Activated CD4-positive, alpha-beta T cell treated with anti-CD3 and anti-CD28 coated beads for 36 hours (primary cell): ENCODE measurements at regions of chr21 and their contacts with region 1.

Region 1: GRCh38 chr21:32392880-32393676 is at the start of gene URB1:
- DNase-seq: peak; percentile 97
- ATAC-seq: peak; percentile 95
- H3K4me3 Mint-ChIP-seq: peak within 1 kb of the TSS; percentile 89
- H3K27ac Mint-ChIP-seq: peak within 1 kb of the TSS; percentile 88
- H3K4me1 Mint-ChIP-seq: peaks cover 43% of the 10 kb centered on the region
- H3K27me3 Mint-ChIP-seq: peaks cover 2% of the 10 kb centered on the region
- total RNA-seq, gene URB1: 24.6 to 28.5 TPM

Region 2: GRCh38 chr21:31731802-31732596 is 661.1 kb before region 1 on chr21 and contains the start of gene SCAF4:
- CTCF ChIA-PET with region 1: no interaction called
- POLR2A ChIA-PET with region 1: no interaction called
- intact Hi-C with region 1: loop called in 1 of 2 experiments (anchors 1 kb)
- DNase-seq: peak; percentile 90
- ATAC-seq: peak; percentile 88
- H3K4me3 Mint-ChIP-seq: no peak within 1 kb of the TSS
- H3K27ac Mint-ChIP-seq: peak within 1 kb of the TSS; percentile 78
- H3K4me1 Mint-ChIP-seq: peaks cover 11% of the 10 kb centered on the region
- H3K27me3 Mint-ChIP-seq: no peaks in the 10 kb centered on the region
- total RNA-seq, gene SCAF4: 47.1 to 62.8 TPM

Region 3: GRCh38 chr21:32173121-32173724 is 219.9 kb before region 1 on chr21:
- CTCF ChIA-PET with region 1: no interaction called
- POLR2A ChIA-PET with region 1: no interaction called
- intact Hi-C with region 1: no loop called
- DNase-seq: no peak
- ATAC-seq: no peak
- H3K4me3 Mint-ChIP-seq: no peak overlapping the region
- H3K27ac Mint-ChIP-seq: no peak overlapping the region
- H3K4me1 Mint-ChIP-seq: no peaks in the 10 kb centered on the region
- H3K27me3 Mint-ChIP-seq: peaks cover 16% of the 10 kb centered on the region

Region 4: DNA sequence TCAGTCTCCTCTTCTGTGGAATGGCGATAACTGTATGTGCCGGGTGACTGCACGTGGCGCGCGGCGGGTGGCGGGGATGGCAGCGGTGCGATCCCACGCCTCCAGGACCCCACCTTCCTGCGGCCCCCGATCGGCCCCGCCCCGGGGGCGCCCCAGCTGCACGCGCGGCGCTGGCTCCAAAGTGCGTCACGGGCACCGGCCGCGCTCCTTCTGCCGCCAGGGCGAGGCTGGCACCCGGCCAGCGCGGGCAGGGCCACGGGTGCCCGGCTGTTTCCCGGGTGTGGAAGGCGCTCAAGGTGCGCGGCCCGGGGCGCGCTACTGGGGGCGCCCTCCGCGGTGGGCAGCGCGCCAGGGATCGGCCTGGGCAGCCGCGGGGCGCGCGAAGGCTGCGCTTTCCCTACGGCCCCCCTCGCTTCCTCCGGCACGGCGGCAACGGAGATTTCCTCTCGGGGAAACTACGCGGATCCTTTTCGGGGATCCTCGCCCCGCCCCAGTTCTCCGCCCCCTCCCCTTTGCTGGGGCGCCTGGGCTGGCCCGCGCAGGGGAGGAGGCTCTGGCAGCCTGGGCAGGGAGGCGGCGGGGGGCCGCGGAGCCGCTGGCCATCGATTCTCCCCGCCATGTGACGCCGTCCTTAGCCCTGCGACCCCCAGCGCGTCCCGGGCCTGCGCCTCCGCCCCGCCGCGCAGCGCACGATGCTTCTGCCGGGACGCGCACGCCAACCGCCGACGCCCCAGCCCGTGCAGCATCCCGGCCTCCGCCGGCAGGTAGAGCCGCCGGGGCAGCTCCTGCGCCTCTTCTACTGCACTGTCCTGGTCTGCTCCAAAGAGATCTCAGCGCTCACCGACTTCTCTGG is 19.3 kb after region 1 on chr21 and contains the start of gene EVA1C:
- CTCF ChIA-PET with region 1: no interaction called
- POLR2A ChIA-PET with region 1: interaction called, 11 read pairs
- intact Hi-C with region 1: loop called (anchors 1 kb)
- DNase-seq: peak; percentile 80
- ATAC-seq: peak; percentile 68
- H3K4me3 Mint-ChIP-seq: peak within 1 kb of the TSS; percentile 94
- H3K27ac Mint-ChIP-seq: peak within 1 kb of the TSS; percentile 97
- H3K4me1 Mint-ChIP-seq: peaks cover 28% of the 10 kb centered on the region
- H3K27me3 Mint-ChIP-seq: no peaks in the 10 kb centered on the region
- total RNA-seq, gene EVA1C: 9.3 to 10.4 TPM

Region 5: DNA sequence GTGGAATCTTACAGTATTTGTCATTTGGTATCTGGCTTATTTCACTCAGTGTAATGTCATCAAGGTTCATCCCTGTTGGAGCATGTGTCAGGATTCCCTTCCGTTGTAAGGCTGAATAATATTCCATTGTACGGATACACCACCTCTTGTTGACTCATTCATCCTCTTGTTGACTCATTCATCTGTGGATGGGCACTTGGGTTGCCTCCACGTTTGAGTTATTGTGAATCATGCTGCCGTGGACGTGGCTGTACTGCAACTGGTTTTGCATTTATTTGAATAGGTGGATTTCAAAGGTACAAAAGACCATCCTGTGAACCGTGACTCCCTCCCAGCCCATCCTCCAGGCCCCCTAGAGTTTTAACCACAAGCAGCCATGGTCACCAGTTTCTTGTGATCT is 204.1 kb after region 1 on chr21:
- CTCF ChIA-PET with region 1: interaction called, 12 read pairs
- POLR2A ChIA-PET with region 1: interaction called, 3 read pairs
- intact Hi-C with region 1: loop called (anchors 2 kb)
- DNase-seq: peak; percentile 39
- ATAC-seq: peak; percentile 50
- H3K4me3 Mint-ChIP-seq: no peak overlapping the region
- H3K27ac Mint-ChIP-seq: peak overlapping the region; percentile 71
- H3K4me1 Mint-ChIP-seq: peaks cover 12% of the 10 kb centered on the region
- H3K27me3 Mint-ChIP-seq: no peaks in the 10 kb centered on the region

Region 6: GRCh38 chr21:32727687-32728455 is 334.8 kb after region 1 on chr21 and contains the start of gene SYNJ1:
- CTCF ChIA-PET with region 1: no interaction called
- POLR2A ChIA-PET with region 1: no interaction called
- intact Hi-C with region 1: loop called in 1 of 2 experiments (anchors 1 kb)
- DNase-seq: peak; percentile 97
- ATAC-seq: peak; percentile 91
- H3K4me3 Mint-ChIP-seq: peak within 1 kb of the TSS; percentile 93
- H3K27ac Mint-ChIP-seq: peak within 1 kb of the TSS; percentile 91
- H3K4me1 Mint-ChIP-seq: peaks cover 54% of the 10 kb centered on the region
- H3K27me3 Mint-ChIP-seq: no peaks in the 10 kb centered on the region
- total RNA-seq, gene SYNJ1: 6.3 to 10.5 TPM

Region 7: GRCh38 chr21:33479679-33480480 is 1086.8 kb after region 1 on chr21 and contains the start of gene TMEM50B:
- CTCF ChIA-PET with region 1: no interaction called
- POLR2A ChIA-PET with region 1: no interaction called
- intact Hi-C with region 1: loop called in 1 of 2 experiments (anchors 5 kb)
- DNase-seq: peak; percentile 99
- ATAC-seq: peak; percentile 97
- H3K4me3 Mint-ChIP-seq: peak within 1 kb of the TSS; percentile 83
- H3K27ac Mint-ChIP-seq: peak within 1 kb of the TSS; percentile 88
- H3K4me1 Mint-ChIP-seq: peaks cover 17% of the 10 kb centered on the region
- H3K27me3 Mint-ChIP-seq: no peaks in the 10 kb centered on the region
- total RNA-seq, gene TMEM50B: 13.6 to 15.2 TPM